SK-N-SH (cell line): ENCODE measurements at regions of chr6 and their contacts with region 1.

Region 1: GRCh38 chr6:38570750-38571149 is 69.0 kb downstream of the BTBD9 start:
- DNase-seq: no peak
- H3K4me3 ChIP-seq: no peak overlapping the region
- H3K27ac ChIP-seq: no peak overlapping the region; a peak in 1 of 4 replicates
- H3K4me1 ChIP-seq: peaks cover 7 to 17% of the 10 kb centered on the region in 2 experiments; a peak in 3 of 4 replicates
- H3K27me3 ChIP-seq: no peaks in the 10 kb centered on the region
- CTCF ChIP-seq: peak; percentile 73
- EP300 ChIP-seq: no peak
- RAD21 ChIP-seq: peak; percentile 76

Region 2: DNA sequence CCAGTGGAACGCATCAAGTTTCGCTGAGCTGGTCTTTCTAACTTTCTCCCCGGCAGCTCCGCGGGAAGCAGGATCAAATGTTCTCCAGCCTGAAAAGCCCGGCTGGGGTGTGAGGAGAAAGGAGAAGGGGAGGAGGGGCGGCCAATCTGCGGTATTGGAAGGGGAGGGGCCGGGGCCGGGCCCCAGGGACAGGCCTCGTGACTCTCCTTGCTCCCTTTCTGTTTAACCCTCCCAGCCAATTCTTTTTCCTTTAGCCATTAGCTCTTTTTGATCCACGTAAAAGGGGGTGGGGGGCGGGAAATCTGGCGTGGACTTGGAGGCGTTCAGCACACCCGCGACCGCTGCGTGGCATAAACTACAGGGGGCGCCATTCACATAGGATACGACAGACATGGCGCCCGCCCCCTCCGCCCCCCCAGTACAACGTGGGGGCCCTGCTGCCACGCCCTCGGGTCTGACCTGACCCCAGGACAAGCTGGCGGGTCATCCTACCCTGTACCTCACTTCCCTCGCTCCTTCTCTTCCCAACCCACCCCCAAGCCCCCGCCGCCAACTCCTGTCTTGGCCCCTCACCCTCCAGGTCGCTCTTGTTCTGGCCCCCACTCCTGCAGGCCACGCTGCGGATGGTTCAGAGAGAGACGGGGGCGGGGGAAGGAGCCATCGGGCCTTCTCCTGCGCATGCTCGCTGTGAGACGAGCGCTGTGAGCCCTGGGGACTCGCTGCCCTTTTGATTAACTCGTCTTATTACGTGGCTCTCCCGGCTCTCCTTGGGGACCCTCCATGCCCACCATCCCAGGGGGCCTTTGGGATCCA is 865.3 kb before region 1 on chr6:
- CTCF ChIA-PET with region 1: interaction called, 14 read pairs
- POLR2A ChIA-PET with region 1: no interaction called
- DNase-seq: peak; percentile 86
- H3K4me3 ChIP-seq: peak overlapping the region in 1 of 2 experiments; percentile 26; a peak in 2 of 4 replicates
- H3K27ac ChIP-seq: peak overlapping the region in 1 of 2 experiments; percentile 74; a peak in 2 of 4 replicates
- H3K4me1 ChIP-seq: peaks cover 0 to 9% of the 10 kb centered on the region in 2 experiments; a peak in 1 of 4 replicates
- H3K27me3 ChIP-seq: no peaks in the 10 kb centered on the region
- CTCF ChIP-seq: peak; percentile 51
- EP300 ChIP-seq: no peak
- RAD21 ChIP-seq: peak; percentile 54

Region 3: GRCh38 chr6:38503032-38503773 is 67.5 kb before region 1 on chr6:
- CTCF ChIA-PET with region 1: interaction called, 13 read pairs
- POLR2A ChIA-PET with region 1: no interaction called
- DNase-seq: no peak
- H3K4me3 ChIP-seq: no peak overlapping the region
- H3K27ac ChIP-seq: no peak overlapping the region
- H3K4me1 ChIP-seq: peaks cover 0 to 9% of the 10 kb centered on the region in 2 experiments; a peak in 2 of 4 replicates
- H3K27me3 ChIP-seq: no peaks in the 10 kb centered on the region
- CTCF ChIP-seq: no peak
- EP300 ChIP-seq: no peak
- RAD21 ChIP-seq: no peak

Region 4: DNA sequence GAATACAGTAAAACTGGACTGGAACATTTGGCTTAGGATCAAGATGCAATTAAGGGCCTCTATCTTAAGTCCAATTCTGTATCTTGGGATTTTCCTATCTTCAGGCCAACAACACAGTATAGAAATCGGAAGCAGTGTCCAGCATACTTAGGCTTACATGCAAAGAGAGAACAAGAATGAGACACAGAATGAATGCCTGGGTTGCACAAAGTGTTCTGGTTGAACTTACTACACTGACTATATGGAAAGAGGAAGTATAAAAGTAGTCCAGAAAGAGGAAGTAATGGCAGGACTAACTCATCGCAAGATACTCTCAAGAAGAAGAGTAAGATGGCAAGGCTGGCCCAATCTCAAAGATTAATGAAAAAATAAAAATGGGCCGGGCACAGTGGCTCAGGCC is 18.6 kb before region 1 on chr6:
- CTCF ChIA-PET with region 1: interaction called, 15 read pairs
- POLR2A ChIA-PET with region 1: no interaction called
- DNase-seq: no peak
- H3K4me3 ChIP-seq: no peak overlapping the region
- H3K27ac ChIP-seq: no peak overlapping the region
- H3K4me1 ChIP-seq: peaks cover 3 to 15% of the 10 kb centered on the region in 2 experiments; a peak in 3 of 4 replicates
- H3K27me3 ChIP-seq: no peaks in the 10 kb centered on the region
- CTCF ChIP-seq: no peak
- EP300 ChIP-seq: no peak
- RAD21 ChIP-seq: no peak